A673 (cell line): ENCODE measurements at regions of chr20 and their contacts with region 1.

Region 1: DNA sequence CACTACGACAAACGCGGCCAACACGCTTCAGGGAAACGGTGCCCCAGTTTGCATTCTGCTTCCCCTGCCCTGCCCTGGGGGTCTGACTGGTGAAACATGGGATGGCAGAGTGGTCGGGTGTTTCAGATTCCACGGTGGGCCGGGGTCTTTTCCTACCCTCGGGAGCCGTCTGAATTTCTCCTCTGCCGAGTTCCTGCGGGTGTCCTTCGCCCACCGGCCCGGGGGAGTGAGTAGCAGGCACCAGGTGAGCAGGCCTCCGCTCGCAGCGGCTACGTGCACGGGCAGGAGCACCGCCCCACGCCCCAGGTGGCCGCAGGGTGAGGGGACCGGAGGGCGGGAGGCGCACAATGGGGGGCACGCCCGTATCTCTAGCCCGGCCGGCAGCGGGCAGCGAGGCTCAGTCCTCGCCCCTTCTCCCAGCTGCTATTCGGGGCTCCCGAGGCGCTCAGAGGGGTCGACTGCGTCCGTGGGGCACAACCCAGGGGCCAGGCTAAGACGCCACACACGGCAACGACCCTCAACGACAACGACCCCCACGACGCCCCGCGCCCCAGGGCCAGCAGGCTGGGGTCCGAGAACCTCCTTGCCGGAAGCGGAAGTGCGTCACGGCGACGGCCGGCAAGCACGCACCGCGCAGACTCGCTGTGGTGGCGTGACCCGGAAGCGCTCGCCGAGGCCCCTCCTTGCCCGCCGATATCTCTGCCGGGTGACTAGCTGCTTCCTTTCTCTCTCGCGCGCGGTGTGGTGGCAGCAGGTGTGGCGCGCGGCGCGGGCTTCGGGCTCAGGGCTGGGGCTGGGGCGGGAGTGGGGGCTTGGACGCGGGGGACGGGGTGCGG is at the start of gene RPS21:
- DNase-seq: peak; percentile 95
- H3K4me3 ChIP-seq: peak within 1 kb of the TSS; percentile 100
- H3K27ac ChIP-seq: peak within 1 kb of the TSS; percentile 96
- H3K4me1 ChIP-seq: peaks cover 24% of the 10 kb centered on the region
- H3K27me3 ChIP-seq: no peaks in the 10 kb centered on the region
- CTCF ChIP-seq: no peak
- total RNA-seq, gene RPS21: 1,502 and 1,506 TPM in 2 replicates

Region 2: DNA sequence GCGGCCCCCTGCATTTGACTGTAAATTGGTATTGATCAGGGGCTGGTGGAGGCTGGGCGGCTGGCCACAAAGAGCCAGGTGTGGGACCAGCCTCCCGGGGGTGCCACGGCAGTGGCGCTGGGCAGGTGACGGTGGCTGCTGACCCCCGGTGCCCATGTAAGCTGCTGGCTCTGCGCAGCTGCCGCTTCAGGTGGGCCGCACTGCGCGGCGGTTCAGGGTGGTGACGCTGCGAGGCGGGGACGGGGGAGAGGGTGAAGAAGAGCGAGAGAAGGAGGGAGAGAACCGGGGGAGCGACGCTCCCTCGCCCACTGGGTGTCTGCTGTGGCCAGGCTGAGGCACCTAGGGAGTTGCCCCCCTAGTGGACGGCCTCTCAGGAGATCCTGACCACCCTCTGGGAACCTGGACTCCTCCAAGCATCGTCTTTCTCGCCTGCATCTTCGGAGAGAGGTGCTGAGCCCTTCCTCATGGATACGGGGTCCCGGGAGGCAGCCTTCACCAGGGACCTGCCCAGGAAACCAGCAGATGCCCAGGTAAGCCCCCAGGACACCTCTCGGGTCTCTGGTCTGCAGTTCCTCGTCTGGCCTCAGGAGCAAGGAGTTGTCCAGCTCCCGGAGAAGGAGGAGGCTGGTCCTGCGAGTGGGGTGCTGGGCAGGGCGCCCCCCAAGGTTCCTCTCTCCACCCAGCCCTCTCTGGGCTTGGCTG is 166.7 kb after region 1 on chr20:
- CTCF ChIA-PET with region 1: no interaction called
- POLR2A ChIA-PET with region 1: interaction called, 11 read pairs
- intact Hi-C with region 1: no loop called
- DNase-seq: no peak
- H3K4me3 ChIP-seq: no peak overlapping the region
- H3K27ac ChIP-seq: no peak overlapping the region
- H3K4me1 ChIP-seq: peaks cover 6% of the 10 kb centered on the region
- H3K27me3 ChIP-seq: peaks cover 90% of the 10 kb centered on the region
- CTCF ChIP-seq: no peak